ENCODE measurements at regions of chr14 and their contacts with region 1.

Region 1: DNA sequence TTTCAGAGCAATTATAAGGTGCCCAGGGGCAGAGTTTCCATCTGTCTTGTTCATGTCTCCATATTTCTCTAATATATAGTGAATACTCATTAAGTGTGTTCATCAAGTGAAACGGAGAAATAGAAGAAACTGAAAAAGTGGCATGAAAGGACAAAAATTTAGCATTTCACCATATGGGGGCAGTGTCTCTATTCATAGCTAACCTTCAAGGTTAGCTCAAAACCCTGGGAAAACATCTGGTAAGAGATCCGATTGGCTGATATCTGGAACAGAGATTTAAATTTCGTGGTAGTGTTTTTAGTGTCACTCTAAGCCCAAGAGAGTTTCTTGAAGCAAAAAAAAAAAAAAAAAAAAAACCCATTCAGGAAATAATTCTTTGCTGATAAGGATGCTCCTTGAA is 367.5 kb downstream of the DAD1 start:
- DNase-seq: peak; percentile 56
- H3K4me3 ChIP-seq: no peak overlapping the region
- H3K27ac ChIP-seq: no peak overlapping the region
- H3K4me1 ChIP-seq: peaks cover under 1% of the 10 kb centered on the region
- H3K27me3 ChIP-seq: no peaks in the 10 kb centered on the region
- CTCF ChIP-seq: peak; percentile 70

Region 2: GRCh38 chr14:22200977-22201605 is 20.4 kb before region 1 on chr14:
- CTCF ChIA-PET with region 1: interaction called, 14 read pairs
- POLR2A ChIA-PET with region 1: interaction called, 16 read pairs
- intact Hi-C with region 1: no loop called
- DNase-seq: peak; percentile 79
- H3K4me3 ChIP-seq: no peak overlapping the region
- H3K27ac ChIP-seq: no peak overlapping the region
- H3K4me1 ChIP-seq: no peaks in the 10 kb centered on the region
- H3K27me3 ChIP-seq: no peaks in the 10 kb centered on the region
- CTCF ChIP-seq: peak; percentile 80

Region 3: GRCh38 chr14:22314181-22314820 is 92.8 kb after region 1 on chr14:
- CTCF ChIA-PET with region 1: interaction called, 4 read pairs
- POLR2A ChIA-PET with region 1: interaction called, 17 read pairs
- intact Hi-C with region 1: no loop called
- DNase-seq: peak; percentile 88
- H3K4me3 ChIP-seq: no peak overlapping the region
- H3K27ac ChIP-seq: peak overlapping the region; percentile 2
- H3K4me1 ChIP-seq: no peaks in the 10 kb centered on the region
- H3K27me3 ChIP-seq: no peaks in the 10 kb centered on the region
- CTCF ChIP-seq: peak; percentile 84

Region 4: DNA sequence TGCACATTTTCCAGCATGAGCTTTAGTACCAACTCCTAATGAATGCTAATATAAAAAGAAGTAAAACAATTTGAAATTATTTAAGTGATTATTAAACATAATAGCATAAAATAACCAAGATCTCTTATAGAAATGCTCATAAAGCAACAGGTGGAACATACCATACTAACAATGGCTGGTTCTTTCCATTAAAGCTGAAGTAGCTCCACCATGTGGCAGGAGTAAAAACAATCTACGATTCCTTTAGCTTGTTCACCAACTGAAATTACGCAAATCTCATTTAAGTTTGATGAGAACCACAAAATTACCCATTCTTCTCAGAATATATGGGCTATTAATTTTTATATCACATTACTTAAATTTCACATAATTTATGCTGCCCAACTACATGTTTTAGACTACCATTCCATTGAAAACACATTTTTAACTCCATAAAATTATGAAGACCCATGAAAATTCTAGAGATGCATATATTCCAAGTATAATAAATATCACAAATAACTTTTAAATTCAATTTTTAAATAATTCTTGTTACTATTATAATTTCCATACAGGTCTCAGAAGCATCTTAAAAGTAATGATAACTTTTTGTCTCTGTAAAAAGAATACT is 153.9 kb after region 1 on chr14:
- CTCF ChIA-PET with region 1: interaction called, 7 read pairs
- POLR2A ChIA-PET with region 1: no interaction called
- intact Hi-C with region 1: loop called (anchors 5 kb)
- DNase-seq: peak; percentile 78
- H3K4me3 ChIP-seq: no peak overlapping the region
- H3K27ac ChIP-seq: no peak overlapping the region
- H3K4me1 ChIP-seq: no peaks in the 10 kb centered on the region
- H3K27me3 ChIP-seq: no peaks in the 10 kb centered on the region
- CTCF ChIP-seq: peak; percentile 86

Region 5: DNA sequence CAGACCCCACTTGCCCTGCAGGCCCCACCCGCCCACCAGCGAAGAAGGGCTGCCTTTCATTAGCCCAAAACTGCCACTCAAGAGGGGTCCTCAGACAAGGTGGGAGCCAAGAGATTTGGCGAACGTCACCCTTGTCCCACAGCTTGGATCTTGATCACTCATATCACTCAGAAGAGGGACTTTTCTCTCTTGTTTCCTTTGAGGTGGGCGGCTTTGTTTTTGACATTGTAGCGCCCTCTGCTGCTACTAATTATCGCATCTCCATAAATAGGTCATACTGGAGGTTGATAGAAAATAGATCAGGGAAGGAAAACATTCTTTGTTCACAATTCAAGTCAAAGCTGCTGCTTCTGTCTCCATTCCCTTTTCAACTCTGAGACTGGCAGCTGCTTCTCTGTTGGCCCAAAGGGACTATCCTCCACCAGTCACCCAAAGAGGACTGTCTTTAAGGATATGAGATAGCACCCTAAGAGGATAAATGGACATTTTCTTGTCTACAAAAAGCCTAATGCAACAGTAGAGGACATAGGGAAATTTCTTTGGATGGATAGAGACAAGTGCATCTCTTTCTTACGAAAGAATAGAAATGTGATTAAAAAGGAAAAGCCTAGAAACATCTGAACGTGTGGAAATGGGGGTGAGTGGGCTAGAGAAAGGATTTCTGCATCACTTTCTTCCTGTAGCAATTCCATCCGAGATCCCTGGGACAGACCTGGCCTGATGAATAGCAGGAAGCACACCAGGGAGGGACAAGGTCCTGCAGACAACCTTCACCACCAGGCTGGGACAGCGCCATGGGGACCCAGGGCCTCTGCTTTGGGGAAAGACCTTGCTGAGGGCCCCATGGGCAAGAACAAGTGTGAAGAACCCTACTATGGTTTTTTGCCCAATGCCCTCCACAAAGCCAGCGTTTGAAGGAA is 251.7 kb after region 1 on chr14:
- CTCF ChIA-PET with region 1: no interaction called
- POLR2A ChIA-PET with region 1: no interaction called
- intact Hi-C with region 1: loop called (anchors 10 kb)
- DNase-seq: peak; percentile 89
- H3K4me3 ChIP-seq: no peak overlapping the region
- H3K27ac ChIP-seq: peak overlapping the region; percentile 80
- H3K4me1 ChIP-seq: peaks cover 94% of the 10 kb centered on the region
- H3K27me3 ChIP-seq: no peaks in the 10 kb centered on the region
- CTCF ChIP-seq: peak; percentile 75